ENCODE measurements at regions of chr13 and their contacts with region 1.

Region 1: GRCh38 chr13:84896128-84896527 is 903.1 kb downstream of the SLITRK6 start:
- DNase-seq: peak; percentile 62
- ATAC-seq: no peak
- H3K4me3 Mint-ChIP-seq: no peak overlapping the region
- H3K27ac Mint-ChIP-seq: no peak overlapping the region
- H3K4me1 Mint-ChIP-seq: no peaks in the 10 kb centered on the region
- H3K27me3 Mint-ChIP-seq: no peaks in the 10 kb centered on the region

Region 2: GRCh38 chr13:84466461-84466860 is 429.7 kb before region 1 on chr13:
- CTCF ChIA-PET with region 1: no interaction called
- POLR2A ChIA-PET with region 1: no interaction called
- intact Hi-C with region 1: no loop called
- DNase-seq: no peak
- ATAC-seq: no peak
- H3K4me3 Mint-ChIP-seq: no peak overlapping the region
- H3K27ac Mint-ChIP-seq: no peak overlapping the region
- H3K4me1 Mint-ChIP-seq: no peaks in the 10 kb centered on the region
- H3K27me3 Mint-ChIP-seq: no peaks in the 10 kb centered on the region

Region 3: DNA sequence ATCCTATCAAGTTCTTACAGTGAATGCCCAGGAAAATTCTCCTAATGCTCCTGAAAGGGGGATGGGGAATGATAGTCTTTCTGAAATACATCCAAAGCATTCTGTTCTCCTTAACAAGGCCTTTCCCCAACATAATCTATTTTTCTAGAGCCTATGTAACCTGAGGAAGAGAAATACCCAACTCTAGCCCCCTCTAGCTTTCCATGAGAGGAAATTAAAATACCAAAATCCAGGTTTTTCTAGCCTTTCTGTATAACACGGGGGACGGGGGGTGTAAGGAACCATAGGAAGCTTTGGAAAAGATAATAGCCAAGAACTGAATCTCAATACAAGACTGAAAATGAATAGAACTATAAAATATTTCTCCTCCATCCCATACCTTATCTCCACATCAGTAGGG is 87.2 kb after region 1 on chr13:
- CTCF ChIA-PET with region 1: no interaction called
- POLR2A ChIA-PET with region 1: no interaction called
- intact Hi-C with region 1: no loop called
- DNase-seq: no peak
- ATAC-seq: no peak
- H3K4me3 Mint-ChIP-seq: no peak overlapping the region
- H3K27ac Mint-ChIP-seq: no peak overlapping the region
- H3K4me1 Mint-ChIP-seq: no peaks in the 10 kb centered on the region
- H3K27me3 Mint-ChIP-seq: no peaks in the 10 kb centered on the region

Region 4: GRCh38 chr13:85806553-85807175 is 910.5 kb after region 1 on chr13:
- CTCF ChIA-PET with region 1: interaction called, 11 read pairs
- POLR2A ChIA-PET with region 1: no interaction called
- intact Hi-C with region 1: loop called (anchors 1 kb)
- DNase-seq: no peak
- ATAC-seq: peak; percentile 42
- H3K4me3 Mint-ChIP-seq: no peak overlapping the region
- H3K27ac Mint-ChIP-seq: no peak overlapping the region
- H3K4me1 Mint-ChIP-seq: no peaks in the 10 kb centered on the region
- H3K27me3 Mint-ChIP-seq: no peaks in the 10 kb centered on the region

Region 5: GRCh38 chr13:85828149-85828548 is 932.0 kb after region 1 on chr13:
- CTCF ChIA-PET with region 1: interaction called, 3 read pairs
- POLR2A ChIA-PET with region 1: no interaction called
- intact Hi-C with region 1: loop called (anchors 1 to 5 kb)
- DNase-seq: no peak
- ATAC-seq: no peak
- H3K4me3 Mint-ChIP-seq: no peak overlapping the region
- H3K27ac Mint-ChIP-seq: no peak overlapping the region
- H3K4me1 Mint-ChIP-seq: no peaks in the 10 kb centered on the region
- H3K27me3 Mint-ChIP-seq: no peaks in the 10 kb centered on the region